ENCODE measurements at regions of chr16 and their contacts with region 1.

Region 1: GRCh38 chr16:89507834-89508590 is at the start of gene SPG7:
- DNase-seq: peak; percentile 85 to 96 (median 93)
- H3K4me3 ChIP-seq: peak within 1 kb of the TSS; percentile 76
- H3K4me3 Mint-ChIP-seq: peak within 1 kb of the TSS; percentile 89 to 97 (median 94)
- H3K27ac ChIP-seq: peak within 1 kb of the TSS; percentile 83
- H3K27ac Mint-ChIP-seq: peak within 1 kb of the TSS; percentile 85 to 98 (median 96)
- H3K4me1 ChIP-seq: peaks cover 40% of the 10 kb centered on the region
- H3K4me1 Mint-ChIP-seq: peaks cover 18 to 53% (median 32%) of the 10 kb centered on the region in 4 donors
- H3K27me3 ChIP-seq: no peaks in the 10 kb centered on the region
- H3K27me3 Mint-ChIP-seq: no peaks in the 10 kb centered on the region
- total RNA-seq, gene SPG7: 157 to 160 TPM

Region 2: DNA sequence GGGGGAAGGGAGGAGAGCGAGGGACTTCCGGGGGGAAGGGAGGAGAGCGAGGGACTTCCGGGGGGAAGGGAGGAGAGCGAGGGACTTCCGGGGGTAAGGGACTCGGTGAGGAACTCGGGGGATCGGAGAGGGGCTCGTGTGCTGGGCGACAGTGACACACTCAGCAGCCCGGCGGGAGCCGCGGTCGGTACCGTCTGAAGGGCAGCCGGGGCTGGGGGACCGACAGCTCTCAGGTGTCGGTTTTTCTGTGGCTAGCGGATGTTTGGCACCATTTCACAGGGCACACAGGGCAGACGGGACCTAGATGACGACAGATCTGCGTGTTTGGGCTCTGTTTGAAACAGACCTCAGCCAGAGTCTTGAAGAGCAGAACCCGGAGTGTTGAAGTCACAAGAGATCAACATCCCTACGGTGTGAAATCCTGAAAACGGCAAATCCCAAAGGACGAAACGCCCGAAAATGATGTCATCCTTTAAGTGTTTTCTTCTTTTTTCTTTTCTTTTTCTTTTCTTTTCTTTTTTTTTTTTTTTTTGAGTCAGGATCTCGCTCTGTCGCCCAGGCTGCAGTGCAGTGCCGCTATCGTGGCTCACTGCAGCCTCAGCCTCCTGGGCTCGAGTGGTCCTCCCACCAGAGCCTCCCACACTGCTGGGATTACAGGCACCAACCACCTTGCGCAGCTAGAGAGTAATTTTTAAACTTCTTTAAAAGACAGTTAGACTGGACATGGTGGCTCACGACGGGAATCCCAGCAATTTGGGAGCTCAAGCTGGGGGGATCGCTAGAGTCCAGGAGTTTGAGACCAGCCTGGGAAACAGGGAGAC is 266.6 kb before region 1 on chr16:
- CTCF ChIA-PET with region 1: interaction called, 12 read pairs
- POLR2A ChIA-PET with region 1: interaction called, 15 read pairs
- intact Hi-C with region 1: no loop called
- DNase-seq: peak; percentile 92 to 97 (median 93)
- H3K4me3 ChIP-seq: peak overlapping the region; percentile 73 to 80
- H3K4me3 Mint-ChIP-seq: peak overlapping the region; percentile 90 to 98 (median 96)
- H3K27ac ChIP-seq: peak overlapping the region; percentile 91
- H3K27ac Mint-ChIP-seq: peak overlapping the region; percentile 95 to 100 (median 99)
- H3K4me1 ChIP-seq: peaks cover 13% of the 10 kb centered on the region
- H3K4me1 Mint-ChIP-seq: peaks cover 8 to 36% (median 18%) of the 10 kb centered on the region in 4 donors
- H3K27me3 ChIP-seq: no peaks in the 10 kb centered on the region
- H3K27me3 Mint-ChIP-seq: no peaks in the 10 kb centered on the region

Region 3: DNA sequence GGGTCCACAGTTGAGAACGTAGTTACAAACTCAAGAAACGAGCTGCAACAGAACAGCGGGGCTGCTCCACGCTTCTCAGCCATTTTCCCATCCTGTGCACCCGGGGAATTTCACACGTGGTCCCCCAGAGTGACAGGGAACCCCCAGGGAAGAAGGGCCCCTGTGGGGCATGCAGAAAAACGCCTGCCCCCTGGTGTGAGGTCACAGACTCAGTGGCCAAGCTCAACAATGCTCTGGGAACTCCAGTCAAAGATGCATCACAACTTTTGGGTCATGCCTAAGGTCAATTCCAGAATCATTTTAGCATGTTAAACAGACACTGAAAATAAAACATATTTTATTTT is 175.1 kb before region 1 on chr16:
- CTCF ChIA-PET with region 1: interaction called, 5 read pairs
- POLR2A ChIA-PET with region 1: interaction called, 9 read pairs
- intact Hi-C with region 1: loop called (anchors 1 kb)
- DNase-seq: peak in 1 of 5 donors; percentile 28
- H3K4me3 ChIP-seq: no peak overlapping the region
- H3K4me3 Mint-ChIP-seq: no peak overlapping the region
- H3K27ac ChIP-seq: no peak overlapping the region
- H3K27ac Mint-ChIP-seq: peak overlapping the region in 2 of 7 donors; percentile 36 to 87
- H3K4me1 ChIP-seq: peaks cover 85% of the 10 kb centered on the region
- H3K4me1 Mint-ChIP-seq: peaks cover 36 to 86% (median 67%) of the 10 kb centered on the region in 4 donors
- H3K27me3 ChIP-seq: no peaks in the 10 kb centered on the region
- H3K27me3 Mint-ChIP-seq: no peaks in the 10 kb centered on the region

Region 4: DNA sequence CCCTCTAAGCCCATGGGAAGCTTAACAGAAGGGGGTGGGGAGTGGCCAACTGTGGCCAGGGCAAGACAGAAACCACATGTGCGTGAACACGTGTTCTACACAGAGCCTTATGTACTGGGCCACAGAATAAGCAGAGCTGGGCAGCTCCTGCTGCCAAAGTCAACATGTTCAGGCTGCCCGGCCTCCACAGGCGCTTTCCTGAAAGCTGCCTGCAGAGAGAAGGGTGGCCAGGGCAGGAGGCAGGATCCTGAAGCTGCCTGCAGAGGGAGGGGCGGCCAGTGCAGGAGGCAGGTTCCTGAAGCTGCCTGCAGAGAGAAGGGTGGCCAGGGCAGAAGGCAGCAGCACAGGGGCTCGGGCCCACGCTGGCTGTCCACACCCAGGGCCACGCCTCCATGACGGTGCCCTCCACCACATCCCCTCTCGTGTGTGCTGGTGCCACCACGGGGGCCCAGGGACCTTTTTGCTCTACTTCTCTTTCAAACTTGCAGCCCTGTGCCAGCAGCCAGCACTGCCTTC is 97.2 kb before region 1 on chr16:
- CTCF ChIA-PET with region 1: no interaction called
- POLR2A ChIA-PET with region 1: no interaction called
- intact Hi-C with region 1: loop called (anchors 5 kb)
- DNase-seq: peak in 2 of 5 donors; percentile 21 to 28
- H3K4me3 ChIP-seq: no peak overlapping the region
- H3K4me3 Mint-ChIP-seq: peak overlapping the region in 7 of 8 donors; percentile 59 to 84 (median 69)
- H3K27ac ChIP-seq: peak overlapping the region; percentile 45
- H3K27ac Mint-ChIP-seq: peak overlapping the region; percentile 88 to 97 (median 95)
- H3K4me1 ChIP-seq: peaks cover 93% of the 10 kb centered on the region
- H3K4me1 Mint-ChIP-seq: peaks cover 57 to 93% (median 79%) of the 10 kb centered on the region in 4 donors
- H3K27me3 ChIP-seq: no peaks in the 10 kb centered on the region
- H3K27me3 Mint-ChIP-seq: no peaks in the 10 kb centered on the region

Region 5: GRCh38 chr16:89490387-89491237 is 17.4 kb before region 1 on chr16 and contains the start of gene ANKRD11:
- CTCF ChIA-PET with region 1: interaction called, 5 read pairs
- POLR2A ChIA-PET with region 1: interaction called, 79 read pairs
- intact Hi-C with region 1: loop called (anchors 1 kb)
- DNase-seq: peak; percentile 99 to 100 (median 100)
- H3K4me3 ChIP-seq: peak within 1 kb of the TSS; percentile 64 to 72
- H3K4me3 Mint-ChIP-seq: peak within 1 kb of the TSS; percentile 88 to 97 (median 94)
- H3K27ac ChIP-seq: peak within 1 kb of the TSS; percentile 95
- H3K27ac Mint-ChIP-seq: peak within 1 kb of the TSS; percentile 96 to 99 (median 97)
- H3K4me1 ChIP-seq: peaks cover 57% of the 10 kb centered on the region
- H3K4me1 Mint-ChIP-seq: peaks cover 35 to 77% (median 57%) of the 10 kb centered on the region in 4 donors
- H3K27me3 ChIP-seq: no peaks in the 10 kb centered on the region
- H3K27me3 Mint-ChIP-seq: no peaks in the 10 kb centered on the region
- total RNA-seq, gene ANKRD11: 229 to 246 TPM

Region 6: DNA sequence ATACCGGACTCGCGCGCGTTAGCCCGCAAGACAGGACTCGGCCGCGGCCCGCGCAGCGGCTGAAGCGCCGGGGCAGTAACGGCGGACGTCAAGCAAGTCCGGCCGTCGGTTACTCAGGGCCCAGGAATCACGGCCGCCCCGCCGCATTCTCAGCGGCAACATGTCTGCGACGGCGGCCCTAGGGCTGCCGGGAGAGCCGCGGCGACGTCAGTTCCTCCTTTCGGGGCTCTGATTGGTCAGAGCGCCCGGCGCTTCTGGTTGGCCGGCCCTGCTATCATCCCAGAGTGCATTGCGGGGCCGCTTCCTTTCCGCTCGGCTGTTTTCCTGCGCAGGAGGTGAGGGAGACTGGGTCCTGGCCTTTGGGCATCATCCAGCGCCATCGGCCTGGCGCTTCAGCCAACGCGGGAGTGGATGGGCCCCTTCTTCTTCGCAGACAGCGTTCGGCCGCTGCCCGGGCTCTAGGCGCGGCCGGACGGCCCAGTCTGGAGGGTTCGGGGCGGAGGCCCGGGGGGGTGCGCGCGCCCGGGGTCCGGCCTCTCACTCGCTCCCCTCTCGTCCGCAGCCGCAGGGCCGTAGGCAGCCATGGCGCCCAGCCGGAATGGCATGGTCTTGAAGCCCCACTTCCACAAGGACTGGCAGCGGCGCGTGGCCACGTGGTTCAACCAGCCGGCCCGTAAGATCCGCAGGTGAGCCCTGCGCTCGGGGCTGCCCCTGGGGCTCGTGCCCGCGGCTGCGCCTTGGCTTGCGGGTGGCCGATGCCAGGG is 52.5 kb after region 1 on chr16 and contains the start of gene RPL13:
- CTCF ChIA-PET with region 1: interaction called, 5 read pairs
- POLR2A ChIA-PET with region 1: interaction called, 8 read pairs
- intact Hi-C with region 1: loop called (anchors 1 kb)
- DNase-seq: peak; percentile 91 to 94 (median 93)
- H3K4me3 ChIP-seq: peak within 1 kb of the TSS; percentile 73 to 85
- H3K4me3 Mint-ChIP-seq: peak within 1 kb of the TSS; percentile 95 to 99 (median 98)
- H3K27ac ChIP-seq: peak within 1 kb of the TSS; percentile 88
- H3K27ac Mint-ChIP-seq: peak within 1 kb of the TSS; percentile 97 to 99 (median 98)
- H3K4me1 ChIP-seq: peaks cover 58% of the 10 kb centered on the region
- H3K4me1 Mint-ChIP-seq: peaks cover 32 to 66% (median 50%) of the 10 kb centered on the region in 4 donors
- H3K27me3 ChIP-seq: no peaks in the 10 kb centered on the region
- H3K27me3 Mint-ChIP-seq: no peaks in the 10 kb centered on the region
- total RNA-seq, gene RPL13: 4,825 to 5,043 TPM

Measured in CD4-positive, alpha-beta memory T cell (primary cell).